ENCODE measurements at regions of chr9 and their contacts with region 1.

Region 1: GRCh38 chr9:22813529-22813928 is 366.9 kb downstream of the DMRTA1 start:
- DNase-seq: peak; percentile 11
- H3K4me3 ChIP-seq: no peak overlapping the region
- H3K27ac ChIP-seq: no peak overlapping the region
- H3K4me1 ChIP-seq: no peaks in the 10 kb centered on the region
- H3K27me3 ChIP-seq: no peaks in the 10 kb centered on the region
- CTCF ChIP-seq: peak; percentile 20 to 37

Region 2: GRCh38 chr9:21473236-21473635 is 1340.3 kb before region 1 on chr9:
- CTCF ChIA-PET with region 1: no interaction called
- dilution Hi-C with region 1: no loop called
- in situ Hi-C with region 1: no loop called
- intact Hi-C with region 1: no loop called
- DNase-seq: no peak
- H3K4me3 ChIP-seq: no peak overlapping the region
- H3K27ac ChIP-seq: no peak overlapping the region
- H3K4me1 ChIP-seq: no peaks in the 10 kb centered on the region
- H3K27me3 ChIP-seq: no peaks in the 10 kb centered on the region
- CTCF ChIP-seq: peak in 1 of 2 donors; percentile 27

Region 3: GRCh38 chr9:22469928-22470544 is 343.5 kb before region 1 on chr9:
- CTCF ChIA-PET with region 1: no interaction called
- dilution Hi-C with region 1: no loop called
- in situ Hi-C with region 1: no loop called
- intact Hi-C with region 1: loop called (anchors 5 kb)
- DNase-seq: peak; percentile 42
- H3K4me3 ChIP-seq: no peak overlapping the region
- H3K27ac ChIP-seq: no peak overlapping the region
- H3K4me1 ChIP-seq: no peaks in the 10 kb centered on the region
- H3K27me3 ChIP-seq: no peaks in the 10 kb centered on the region
- CTCF ChIP-seq: peak; percentile 76 to 82

Region 4: DNA sequence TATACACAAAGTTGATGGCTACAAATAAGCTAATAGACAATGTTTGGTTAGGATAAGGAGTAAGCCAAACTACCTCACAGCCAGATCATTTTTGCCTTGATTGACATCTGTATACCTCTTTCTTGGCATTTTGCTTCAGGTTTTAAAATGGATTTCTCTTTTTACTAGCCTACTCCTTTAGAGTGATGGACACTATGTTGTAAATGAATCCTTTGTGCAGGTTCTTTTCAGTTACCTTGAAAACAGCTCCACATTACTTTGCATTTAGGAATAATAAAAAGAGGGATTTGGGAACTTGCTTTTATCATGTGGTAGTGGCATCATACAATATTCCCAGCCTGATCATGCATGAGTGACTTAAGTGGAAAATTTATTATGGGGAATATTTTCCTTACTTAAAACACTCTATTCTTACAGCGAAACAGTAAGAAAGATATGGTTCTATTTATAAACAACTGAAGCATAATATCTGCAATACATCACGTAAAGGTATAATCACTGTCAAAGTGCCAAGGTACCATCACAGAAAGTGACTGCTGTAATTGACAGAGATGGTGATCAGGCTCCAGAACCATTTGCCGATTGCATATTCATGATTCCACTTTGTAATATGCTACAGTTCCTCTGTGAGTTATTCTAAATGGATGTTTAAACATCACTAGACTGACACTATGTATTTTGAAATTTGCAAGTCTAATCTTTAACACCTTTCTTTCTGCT is 39.9 kb before region 1 on chr9:
- CTCF ChIA-PET with region 1: no interaction called
- dilution Hi-C with region 1: no loop called
- in situ Hi-C with region 1: no loop called
- intact Hi-C with region 1: no loop called
- DNase-seq: no peak
- H3K4me3 ChIP-seq: no peak overlapping the region
- H3K27ac ChIP-seq: no peak overlapping the region
- H3K4me1 ChIP-seq: no peaks in the 10 kb centered on the region
- H3K27me3 ChIP-seq: peaks cover 2% of the 10 kb centered on the region
- CTCF ChIP-seq: no peak

Region 5: GRCh38 chr9:23587433-23587832 is 773.9 kb after region 1 on chr9:
- CTCF ChIA-PET with region 1: no interaction called
- dilution Hi-C with region 1: no loop called
- in situ Hi-C with region 1: no loop called
- intact Hi-C with region 1: loop called (anchors 10 kb)
- DNase-seq: no peak
- H3K4me3 ChIP-seq: no peak overlapping the region
- H3K27ac ChIP-seq: no peak overlapping the region
- H3K4me1 ChIP-seq: peaks cover 9% of the 10 kb centered on the region
- H3K27me3 ChIP-seq: no peaks in the 10 kb centered on the region
- CTCF ChIP-seq: no peak

Region 6: DNA sequence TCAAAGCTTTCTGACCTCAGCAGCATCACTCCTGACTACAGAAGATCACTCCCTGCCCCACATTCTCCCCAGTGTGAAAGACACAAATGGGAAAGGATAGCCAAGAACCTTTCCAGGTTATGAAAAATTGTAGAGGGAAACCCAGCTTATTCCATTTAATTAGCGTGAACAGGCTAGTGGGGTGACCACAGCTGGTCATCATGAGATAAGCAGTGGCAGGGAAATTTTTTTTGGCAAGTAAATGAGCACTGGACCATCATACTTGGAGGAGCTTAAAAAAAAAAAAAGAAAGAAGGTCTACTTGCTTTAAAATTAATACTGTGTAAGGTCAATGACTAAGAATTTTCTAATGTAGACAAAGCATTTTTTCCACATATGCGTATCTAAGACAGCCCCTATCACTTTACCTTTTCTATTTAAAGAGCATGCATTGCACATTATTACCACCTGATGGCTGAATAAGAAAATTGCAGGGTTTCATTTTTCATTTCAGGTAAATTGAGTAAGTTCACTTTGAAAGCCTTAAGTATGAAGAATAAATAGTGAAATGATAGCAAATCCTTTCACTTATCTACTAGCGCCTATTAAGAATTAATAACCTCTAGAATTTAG is 888.9 kb after region 1 on chr9:
- CTCF ChIA-PET with region 1: no interaction called
- dilution Hi-C with region 1: no loop called
- in situ Hi-C with region 1: no loop called
- intact Hi-C with region 1: loop called (anchors 10 kb)
- DNase-seq: no peak
- H3K4me3 ChIP-seq: no peak overlapping the region
- H3K27ac ChIP-seq: no peak overlapping the region
- H3K4me1 ChIP-seq: no peaks in the 10 kb centered on the region
- H3K27me3 ChIP-seq: no peaks in the 10 kb centered on the region
- CTCF ChIP-seq: peak; percentile 23 to 42

Region 7: DNA sequence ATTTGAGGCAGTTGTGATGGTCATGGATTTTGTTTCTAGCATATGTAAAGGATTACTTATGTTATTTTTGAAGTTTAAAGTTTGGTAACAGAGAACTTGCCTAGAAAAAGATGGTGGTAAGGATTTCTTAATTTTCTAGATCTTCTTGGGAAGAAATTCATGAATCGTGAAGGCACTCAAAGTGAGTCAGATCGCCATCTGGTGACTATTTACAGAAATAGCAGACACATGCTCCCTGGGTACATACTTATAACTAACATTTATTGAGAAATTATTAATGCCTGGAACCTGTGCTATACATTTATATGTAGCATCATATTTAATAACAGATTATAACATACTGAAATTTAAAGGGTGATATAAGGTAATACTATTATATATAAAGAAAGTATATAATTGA is 1432.5 kb after region 1 on chr9:
- CTCF ChIA-PET with region 1: no interaction called
- dilution Hi-C with region 1: no loop called
- in situ Hi-C with region 1: no loop called
- intact Hi-C with region 1: loop called (anchors 5 kb)
- DNase-seq: peak; percentile 17
- H3K4me3 ChIP-seq: no peak overlapping the region
- H3K27ac ChIP-seq: no peak overlapping the region
- H3K4me1 ChIP-seq: no peaks in the 10 kb centered on the region
- H3K27me3 ChIP-seq: no peaks in the 10 kb centered on the region
- CTCF ChIP-seq: peak; percentile 49 to 61